Right cardiac atrium (tissue), 5 donors: ENCODE measurements at regions of chr11 and their contacts with region 1.

Region 1: GRCh38 chr11:57527056-57527631 is 3.4 kb downstream of the TIMM10 start:
- DNase-seq: peak; percentile 65 to 90 (median 79)
- ATAC-seq: no peak
- H3K4me3 ChIP-seq: no peak overlapping the region
- H3K27ac ChIP-seq: no peak overlapping the region
- H3K4me1 ChIP-seq: no peaks in the 10 kb centered on the region
- H3K27me3 ChIP-seq: no peaks in the 10 kb centered on the region

Region 2: GRCh38 chr11:57205041-57205671 is 322.0 kb before region 1 on chr11:
- intact Hi-C with region 1: no loop called
- DNase-seq: peak; percentile 49 to 80 (median 70)
- ATAC-seq: peak; percentile 53 to 54
- H3K4me3 ChIP-seq: no peak overlapping the region
- H3K27ac ChIP-seq: no peak overlapping the region
- H3K4me1 ChIP-seq: peaks cover 16% of the 10 kb centered on the region
- H3K27me3 ChIP-seq: no peaks in the 10 kb centered on the region

Region 3: GRCh38 chr11:57493507-57494503 is 33.3 kb before region 1 on chr11:
- intact Hi-C with region 1: loop called in 3 of 4 experiments (anchors 2 to 5 kb)
- DNase-seq: peak in 2 of 3 donors; percentile 76 to 78
- ATAC-seq: peak; percentile 53 to 58
- H3K4me3 ChIP-seq: no peak overlapping the region
- H3K27ac ChIP-seq: no peak overlapping the region
- H3K4me1 ChIP-seq: peaks cover 4% of the 10 kb centered on the region
- H3K27me3 ChIP-seq: no peaks in the 10 kb centered on the region